Lower leg skin (tissue), 4 donors: ENCODE measurements at regions of chr3 and their contacts with region 1.

Region 1: GRCh38 chr3:185983495-185984141 is 45.8 kb upstream of the TRA2B start:
- DNase-seq: peak; percentile 80 to 93
- H3K4me3 ChIP-seq: no peak overlapping the region
- CTCF ChIP-seq: peak in 1 of 3 donors; percentile 49
- POLR2A ChIP-seq: no peak

Region 2: DNA sequence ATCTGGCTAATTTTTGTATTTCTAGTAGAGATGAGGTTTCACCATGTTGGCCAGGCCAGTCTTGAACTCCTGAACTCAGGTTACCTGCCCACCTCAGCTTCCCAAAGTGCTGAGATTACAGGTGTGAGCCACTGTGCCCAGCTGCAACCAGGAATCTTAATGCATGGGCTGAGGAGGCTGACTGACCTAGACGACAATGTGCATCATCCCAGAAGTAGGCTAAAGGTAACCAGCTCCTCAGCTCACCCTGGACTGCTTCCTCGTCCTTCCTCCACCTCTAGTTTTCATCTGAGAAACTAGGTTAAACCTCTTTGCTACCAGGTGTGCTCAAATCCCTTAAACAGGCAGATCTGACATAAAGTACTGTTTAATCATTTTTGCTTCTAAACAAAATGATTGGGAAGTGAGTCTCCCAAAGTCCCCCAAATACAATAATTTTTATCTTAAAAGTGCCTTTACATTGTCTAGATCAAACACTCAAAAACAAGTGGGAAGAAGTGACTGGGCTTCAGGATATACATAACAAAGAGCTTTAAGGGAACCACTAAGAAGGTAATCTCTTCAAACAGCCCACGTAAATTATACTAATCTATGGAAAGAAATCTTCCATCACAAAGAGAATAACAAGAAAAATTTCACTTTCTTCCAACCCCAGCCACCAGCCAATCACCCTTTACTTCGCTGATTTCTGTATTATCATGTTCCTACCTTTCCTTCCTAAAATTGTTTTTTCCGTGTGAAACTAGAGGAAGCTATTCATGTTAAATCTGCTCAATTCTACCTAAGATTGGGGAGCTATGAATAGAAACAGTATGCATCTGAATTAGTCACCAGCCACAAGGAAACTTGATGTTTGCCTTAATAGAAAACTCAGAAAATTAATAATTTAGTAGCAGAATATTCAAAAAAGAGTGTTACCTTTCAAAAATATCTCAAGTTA is 193.5 kb before region 1 on chr3:
- intact Hi-C with region 1: no loop called
- DNase-seq: no peak
- H3K4me3 ChIP-seq: no peak overlapping the region
- CTCF ChIP-seq: no peak
- POLR2A ChIP-seq: no peak

Region 3: DNA sequence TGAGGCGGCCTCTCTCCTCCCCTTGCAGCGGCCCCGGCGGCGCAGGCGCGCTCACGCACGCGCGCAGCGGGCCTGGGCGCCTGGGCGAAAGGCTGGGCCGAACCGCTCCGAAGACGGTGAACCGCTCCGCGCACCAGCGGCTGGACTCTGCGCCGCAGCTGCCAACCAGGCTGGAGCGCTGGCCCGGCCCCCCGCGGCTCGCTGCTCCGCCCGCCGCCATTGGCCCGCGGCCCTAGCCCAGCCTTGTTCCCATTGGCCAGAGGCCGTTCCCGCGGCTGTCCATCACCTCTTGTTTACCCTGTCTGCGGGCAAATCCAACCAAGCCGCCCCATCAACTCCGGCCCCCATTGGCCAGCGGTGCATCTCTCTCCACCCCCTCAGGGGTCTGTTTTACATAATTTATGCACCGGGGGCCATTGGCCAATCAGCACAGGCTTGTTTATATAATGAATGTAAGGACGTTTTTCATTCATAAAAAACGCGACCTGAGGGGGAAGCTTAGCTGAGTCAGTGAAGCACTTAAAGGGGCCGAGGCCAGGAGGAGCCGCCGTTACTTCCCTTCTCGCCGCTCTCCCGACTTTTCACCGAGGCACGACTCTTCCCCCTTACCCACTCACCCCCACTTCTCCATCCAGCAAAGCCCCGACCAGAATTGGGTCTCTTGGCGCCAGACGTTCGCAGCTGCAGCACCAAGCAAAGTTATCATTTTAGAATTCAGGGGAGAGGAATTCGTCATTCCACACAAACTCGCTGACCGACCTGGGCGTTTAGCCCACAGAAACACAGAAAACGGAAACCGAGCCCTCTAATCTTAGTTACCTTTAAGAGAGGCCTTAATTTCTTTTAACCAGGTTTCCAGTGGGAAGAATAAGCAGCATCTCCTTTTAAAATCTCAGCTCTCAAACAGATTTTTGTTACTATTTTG is 125.6 kb after region 1 on chr3 and contains the start of gene ETV5:
- intact Hi-C with region 1: no loop called
- DNase-seq: peak; percentile 99 to 100
- H3K4me3 ChIP-seq: peak within 1 kb of the TSS; percentile 64
- CTCF ChIP-seq: no peak
- POLR2A ChIP-seq: no peak
- total RNA-seq, gene ETV5: 8.1 to 15.3 (median 9.7) TPM

Region 4: DNA sequence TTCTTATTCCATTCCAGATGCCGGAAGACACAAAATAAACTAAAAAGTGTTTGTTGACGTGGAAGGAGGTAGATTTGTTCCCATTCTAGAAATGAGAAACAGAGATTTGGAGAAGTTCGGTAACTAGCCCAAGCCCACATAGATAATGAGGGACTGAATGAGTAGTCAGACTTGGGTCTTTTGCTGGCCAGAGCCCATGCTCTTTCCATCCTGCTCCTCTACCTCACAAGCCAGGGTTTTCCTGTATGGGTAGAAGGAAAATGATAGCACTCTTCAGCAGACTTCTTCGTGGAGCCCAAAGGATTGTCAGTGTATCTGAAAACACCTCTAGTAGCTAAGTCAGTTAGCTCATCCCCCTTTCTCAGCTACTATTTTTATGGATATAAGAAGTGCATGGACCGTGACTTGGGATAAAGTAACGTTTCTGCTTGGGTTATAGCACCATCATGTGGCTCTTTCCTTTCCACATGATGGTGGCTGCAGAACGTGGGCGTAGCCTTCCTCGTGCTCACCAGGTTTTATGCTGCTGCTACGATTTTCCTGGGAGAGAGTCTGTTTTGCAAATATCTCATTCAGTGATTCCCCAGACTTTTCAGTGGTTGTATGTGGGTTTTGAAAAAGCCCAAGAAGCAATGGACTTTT is 293.8 kb after region 1 on chr3:
- intact Hi-C with region 1: loop called (anchors 5 kb)
- DNase-seq: peak; percentile 30 to 36
- H3K4me3 ChIP-seq: no peak overlapping the region
- CTCF ChIP-seq: no peak
- POLR2A ChIP-seq: no peak

Region 5: GRCh38 chr3:186540221-186540834 is 556.7 kb after region 1 on chr3:
- intact Hi-C with region 1: loop called (anchors 5 kb)
- DNase-seq: peak; percentile 73 to 91
- H3K4me3 ChIP-seq: no peak overlapping the region
- CTCF ChIP-seq: no peak
- POLR2A ChIP-seq: no peak